Activated CD4-positive, alpha-beta memory T cell treated with anti-CD3 and anti-CD28 coated beads for 36 hours (primary cell): ENCODE measurements at regions of chr12 and their contacts with region 1.

Region 1: GRCh38 chr12:92065018-92065499 is 80.6 kb downstream of the BTG1 start:
- DNase-seq: peak; percentile 74
- H3K4me3 Mint-ChIP-seq: peak overlapping the region; percentile 59
- H3K27ac Mint-ChIP-seq: peak overlapping the region; percentile 82
- H3K4me1 Mint-ChIP-seq: peaks cover 49% of the 10 kb centered on the region
- H3K27me3 Mint-ChIP-seq: no peaks in the 10 kb centered on the region

Region 2: GRCh38 chr12:92034858-92035401 is 30.1 kb before region 1 on chr12:
- CTCF ChIA-PET with region 1: no interaction called
- POLR2A ChIA-PET with region 1: no interaction called
- intact Hi-C with region 1: loop called (anchors 1 kb)
- DNase-seq: peak; percentile 66
- H3K4me3 Mint-ChIP-seq: peak overlapping the region; percentile 84
- H3K27ac Mint-ChIP-seq: peak overlapping the region; percentile 78
- H3K4me1 Mint-ChIP-seq: peaks cover 83% of the 10 kb centered on the region
- H3K27me3 Mint-ChIP-seq: no peaks in the 10 kb centered on the region

Region 3: GRCh38 chr12:92049403-92049802 is 15.7 kb before region 1 on chr12:
- CTCF ChIA-PET with region 1: no interaction called
- POLR2A ChIA-PET with region 1: no interaction called
- intact Hi-C with region 1: loop called (anchors 1 kb)
- DNase-seq: no peak
- H3K4me3 Mint-ChIP-seq: no peak overlapping the region
- H3K27ac Mint-ChIP-seq: no peak overlapping the region
- H3K4me1 Mint-ChIP-seq: peaks cover 70% of the 10 kb centered on the region
- H3K27me3 Mint-ChIP-seq: no peaks in the 10 kb centered on the region

Region 4: DNA sequence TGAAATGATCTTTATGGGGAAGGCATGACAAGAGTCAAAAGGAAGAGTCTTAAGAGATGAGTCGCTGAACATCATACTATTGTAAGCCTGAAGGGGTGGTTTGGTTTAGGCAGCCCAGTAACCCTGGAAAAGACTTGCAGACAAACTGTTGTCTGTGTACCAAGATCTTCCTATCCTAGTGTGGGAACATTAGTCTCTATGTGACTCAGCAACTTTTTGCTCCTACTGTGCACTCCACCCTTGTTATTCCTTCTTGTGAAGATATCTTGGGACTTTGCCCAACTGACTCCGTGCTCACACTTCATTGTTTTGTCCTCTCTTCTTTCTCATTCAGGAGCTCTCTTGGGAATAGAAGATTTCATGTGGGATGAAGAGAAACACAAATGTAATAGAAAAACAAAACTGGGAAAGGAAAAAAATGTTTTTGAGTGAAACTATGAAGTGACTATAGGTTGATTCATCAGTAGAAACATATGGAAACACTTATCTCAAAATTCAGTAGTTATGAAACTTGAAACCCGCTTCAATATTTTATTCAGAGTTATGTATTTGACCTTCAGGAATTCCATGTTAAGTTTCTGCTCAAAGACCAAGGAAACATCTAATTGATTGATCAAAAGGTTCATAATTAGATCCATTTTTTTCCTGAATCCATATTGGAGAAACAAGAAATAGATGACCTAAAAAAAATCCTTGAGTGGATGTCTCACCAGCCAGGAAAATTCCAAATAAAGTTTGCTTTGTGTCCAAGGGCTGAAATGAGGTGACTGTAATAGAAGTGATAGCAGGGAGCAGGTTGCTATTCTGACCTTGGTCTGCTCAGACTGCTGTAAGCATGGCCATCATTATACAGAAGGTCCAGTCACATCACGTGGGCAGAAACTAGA is 13.4 kb after region 1 on chr12:
- CTCF ChIA-PET with region 1: no interaction called
- POLR2A ChIA-PET with region 1: interaction called, 3 read pairs
- intact Hi-C with region 1: loop called (anchors 1 kb)
- DNase-seq: peak; percentile 36
- H3K4me3 Mint-ChIP-seq: no peak overlapping the region
- H3K27ac Mint-ChIP-seq: peak overlapping the region; percentile 70
- H3K4me1 Mint-ChIP-seq: peaks cover 60% of the 10 kb centered on the region
- H3K27me3 Mint-ChIP-seq: no peaks in the 10 kb centered on the region